Activated CD4-positive, alpha-beta T cell treated with anti-CD3 and anti-CD28 coated beads for 36 hours (primary cell): ENCODE measurements at regions of chr11 and their contacts with region 1.

Region 1: DNA sequence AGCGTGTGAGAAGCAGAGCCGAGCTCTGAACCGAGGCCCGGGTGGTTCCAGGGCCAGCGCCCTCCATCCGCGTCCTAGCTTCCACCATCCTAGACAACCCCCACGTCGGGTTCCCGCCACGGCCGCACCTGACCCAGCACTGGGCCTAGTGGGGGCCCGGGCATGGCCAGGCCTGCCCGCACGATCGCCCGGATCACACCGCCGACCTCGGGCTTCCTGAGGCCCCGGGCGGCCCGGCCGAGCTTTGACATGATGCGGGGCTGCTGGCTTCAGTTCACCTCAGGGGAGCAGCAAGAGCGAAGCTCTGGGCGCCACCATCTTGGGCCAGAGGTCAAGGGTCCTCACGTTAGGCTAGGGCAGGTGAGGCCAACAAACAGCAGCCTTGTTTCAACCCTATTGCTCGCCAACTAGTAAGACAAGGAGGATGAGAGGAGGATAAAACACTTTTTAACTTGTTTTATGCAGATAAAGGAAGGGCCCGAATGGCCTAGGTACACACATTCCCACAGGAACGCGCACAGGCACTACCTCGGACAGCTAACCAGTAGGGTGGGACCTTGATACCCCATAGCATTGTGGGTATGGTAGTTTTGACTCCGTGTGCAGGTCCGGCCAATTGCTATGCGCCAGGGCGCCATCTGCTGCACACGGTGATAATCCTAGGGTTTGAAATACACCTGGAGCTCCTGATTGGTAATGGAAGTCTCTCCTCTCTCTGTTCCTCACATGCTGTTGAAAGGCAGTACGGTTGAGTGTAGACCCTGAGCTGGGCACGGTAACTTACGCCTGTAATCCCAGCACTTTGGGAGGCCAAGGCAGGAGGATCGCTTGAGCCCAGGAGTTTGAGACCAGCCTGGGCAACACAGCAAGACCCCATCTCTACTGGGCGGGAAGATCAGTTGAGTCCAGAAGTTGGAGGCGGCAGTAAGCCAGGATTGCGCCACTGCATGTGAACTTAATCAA is at the start of gene MRPL11:
- DNase-seq: peak; percentile 94
- ATAC-seq: peak; percentile 99
- H3K4me3 Mint-ChIP-seq: peak within 1 kb of the TSS; percentile 85
- H3K27ac Mint-ChIP-seq: peak within 1 kb of the TSS; percentile 98
- H3K4me1 Mint-ChIP-seq: peaks cover 8% of the 10 kb centered on the region
- H3K27me3 Mint-ChIP-seq: no peaks in the 10 kb centered on the region
- total RNA-seq, gene MRPL11: 115 to 120 TPM

Region 2: GRCh38 chr11:65720237-65720934 is 718.4 kb before region 1 on chr11 and contains the start of gene RNASEH2C:
- CTCF ChIA-PET with region 1: no interaction called
- POLR2A ChIA-PET with region 1: no interaction called
- intact Hi-C with region 1: loop called in 1 of 2 experiments (anchors 2 kb)
- DNase-seq: peak; percentile 92
- ATAC-seq: peak; percentile 94
- H3K4me3 Mint-ChIP-seq: peak within 1 kb of the TSS; percentile 84
- H3K27ac Mint-ChIP-seq: peak within 1 kb of the TSS; percentile 88
- H3K4me1 Mint-ChIP-seq: peaks cover 23% of the 10 kb centered on the region
- H3K27me3 Mint-ChIP-seq: no peaks in the 10 kb centered on the region
- total RNA-seq, gene RNASEH2C: 72.5 to 96.8 TPM

Region 3: GRCh38 chr11:66336234-66337102 is 102.3 kb before region 1 on chr11 and contains the start of gene RIN1:
- CTCF ChIA-PET with region 1: no interaction called
- POLR2A ChIA-PET with region 1: no interaction called
- intact Hi-C with region 1: no loop called
- DNase-seq: peak; percentile 79
- ATAC-seq: peak; percentile 83
- H3K4me3 Mint-ChIP-seq: peak within 1 kb of the TSS; percentile 56
- H3K27ac Mint-ChIP-seq: peak within 1 kb of the TSS; percentile 47
- H3K4me1 Mint-ChIP-seq: peaks cover 19% of the 10 kb centered on the region
- H3K27me3 Mint-ChIP-seq: no peaks in the 10 kb centered on the region
- total RNA-seq, gene RIN1: 1.5 to 1.6 TPM

Region 4: GRCh38 chr11:66386171-66387069 is 52.4 kb before region 1 on chr11:
- CTCF ChIA-PET with region 1: interaction called, 13 read pairs
- POLR2A ChIA-PET with region 1: no interaction called
- intact Hi-C with region 1: loop called in 1 of 2 experiments (anchors 5 kb)
- DNase-seq: peak; percentile 92
- ATAC-seq: peak; percentile 80
- H3K4me3 Mint-ChIP-seq: peak overlapping the region; percentile 47
- H3K27ac Mint-ChIP-seq: peak overlapping the region; percentile 15
- H3K4me1 Mint-ChIP-seq: peaks cover 7% of the 10 kb centered on the region
- H3K27me3 Mint-ChIP-seq: no peaks in the 10 kb centered on the region

Region 5: GRCh38 chr11:66421492-66422205 is 17.1 kb before region 1 on chr11:
- CTCF ChIA-PET with region 1: interaction called, 14 read pairs
- POLR2A ChIA-PET with region 1: interaction called, 3 read pairs
- intact Hi-C with region 1: loop called in 1 of 2 experiments (anchors 1 kb)
- DNase-seq: peak; percentile 93
- ATAC-seq: peak; percentile 40
- H3K4me3 Mint-ChIP-seq: no peak overlapping the region
- H3K27ac Mint-ChIP-seq: no peak overlapping the region
- H3K4me1 Mint-ChIP-seq: peaks cover 30% of the 10 kb centered on the region
- H3K27me3 Mint-ChIP-seq: peaks cover 35% of the 10 kb centered on the region

Region 6: GRCh38 chr11:66545701-66546367 is 107.0 kb after region 1 on chr11 and contains the start of gene ZDHHC24:
- CTCF ChIA-PET with region 1: no interaction called
- POLR2A ChIA-PET with region 1: no interaction called
- intact Hi-C with region 1: loop called in 1 of 2 experiments (anchors 1 kb)
- DNase-seq: peak; percentile 95
- ATAC-seq: peak; percentile 94
- H3K4me3 Mint-ChIP-seq: peak within 1 kb of the TSS; percentile 76
- H3K27ac Mint-ChIP-seq: peak within 1 kb of the TSS; percentile 67
- H3K4me1 Mint-ChIP-seq: peaks cover 20% of the 10 kb centered on the region
- H3K27me3 Mint-ChIP-seq: peaks cover 5% of the 10 kb centered on the region
- total RNA-seq, gene ZDHHC24: 9.7 to 11.3 TPM

Region 7: GRCh38 chr11:66607126-66607834 is 168.5 kb after region 1 on chr11:
- CTCF ChIA-PET with region 1: no interaction called
- POLR2A ChIA-PET with region 1: no interaction called
- intact Hi-C with region 1: no loop called
- DNase-seq: no peak
- ATAC-seq: no peak
- H3K4me3 Mint-ChIP-seq: no peak overlapping the region
- H3K27ac Mint-ChIP-seq: no peak overlapping the region
- H3K4me1 Mint-ChIP-seq: peaks cover 8% of the 10 kb centered on the region
- H3K27me3 Mint-ChIP-seq: no peaks in the 10 kb centered on the region